ENCODE measurements at regions of chr11 and their contacts with region 1.

Region 1: DNA sequence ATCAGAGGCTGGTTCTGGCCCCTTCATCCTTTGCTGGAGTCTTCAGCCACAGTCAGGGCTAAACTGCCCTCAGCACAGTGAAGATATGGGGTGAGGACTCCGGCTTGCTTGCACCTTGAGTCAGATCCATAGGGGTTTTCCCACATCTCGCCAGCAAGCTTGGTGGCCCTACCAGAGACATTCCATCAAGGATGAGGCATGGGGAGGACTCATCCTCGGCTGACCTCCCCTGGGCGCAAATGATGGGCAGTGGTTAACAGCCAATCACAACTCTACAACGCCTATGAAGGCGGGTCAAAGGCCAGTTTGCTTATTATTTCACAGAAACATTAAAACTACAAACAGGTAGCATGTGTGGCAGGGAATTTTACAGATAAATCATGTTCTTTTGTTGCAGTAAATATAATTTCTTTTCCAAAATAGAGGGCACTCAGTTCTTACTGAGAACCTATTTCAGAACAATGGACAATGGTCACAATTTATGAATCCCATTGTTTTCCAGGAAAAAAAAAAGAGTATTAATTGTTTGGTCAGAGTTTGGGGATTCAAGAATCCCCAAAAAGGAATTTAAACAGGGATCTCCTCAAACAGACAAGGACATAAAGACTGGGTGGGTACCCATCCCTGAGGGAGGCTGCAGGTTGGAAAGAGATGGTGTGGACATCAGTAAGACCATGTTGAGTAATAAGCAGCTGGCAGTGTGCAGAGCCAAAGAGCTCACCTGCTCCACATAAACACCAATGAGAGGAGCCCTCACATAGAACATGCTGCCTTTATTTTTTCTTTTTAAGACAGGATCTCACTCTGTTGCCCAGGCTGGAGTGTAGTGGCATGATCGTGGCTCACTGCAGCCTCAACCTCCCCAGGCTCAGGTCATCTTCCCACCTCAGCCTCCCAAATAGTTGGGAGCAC is 14.8 kb downstream of the PLAAT3 start:
- DNase-seq: no peak
- H3K4me3 ChIP-seq: no peak overlapping the region
- H3K27ac ChIP-seq: no peak overlapping the region
- H3K4me1 ChIP-seq: peaks cover 0 to 5% (median 1%) of the 10 kb centered on the region in 4 experiments; a peak in 3 of 7 replicates
- H3K27me3 ChIP-seq: no peaks in the 10 kb centered on the region
- CTCF ChIP-seq: no peak
- EP300 ChIP-seq: no peak
- POLR2A ChIP-seq: no peak
- RAD21 ChIP-seq: no peak

Region 2: GRCh38 chr11:63635762-63636465 is 36.4 kb after region 1 on chr11:
- CTCF ChIA-PET with region 1: interaction called, 10 read pairs
- POLR2A ChIA-PET with region 1: no interaction called
- DNase-seq: peak; percentile 17 to 85
- H3K4me3 ChIP-seq: no peak overlapping the region
- H3K27ac ChIP-seq: peak overlapping the region; percentile 11; the same call in 1 of the 2 replicates
- H3K4me1 ChIP-seq: peaks cover 0 to 2% (median 0%) of the 10 kb centered on the region in 4 experiments; a peak in 1 of 7 replicates
- H3K27me3 ChIP-seq: no peaks in the 10 kb centered on the region
- CTCF ChIP-seq: peak; percentile 42 to 84 (median 83)
- EP300 ChIP-seq: no peak
- POLR2A ChIP-seq: no peak
- RAD21 ChIP-seq: peak; percentile 99

Measured in H1 (cell line).